ENCODE measurements at regions of chr11 and their contacts with region 1.

Region 1: GRCh38 chr11:75241036-75241905 is 697 bp downstream of the TPBGL start:
- DNase-seq: peak; percentile 86 to 87
- ATAC-seq: peak; percentile 79 to 90
- H3K4me3 ChIP-seq: peak overlapping the region; percentile 54
- H3K27ac ChIP-seq: peak overlapping the region; percentile 68 to 81; a peak in 5 of 6 replicates
- H3K4me1 ChIP-seq: peaks cover 10% of the 10 kb centered on the region; the same call in 2 of the 3 replicates
- CTCF ChIP-seq: peak; percentile 99
- EP300 ChIP-seq: no peak
- POLR2A ChIP-seq: 0 out of 2 replicates have a peak, but pooled peaks have one; percentile 36
- RAD21 ChIP-seq: peak; percentile 40 to 69; a peak in 4 of 5 replicates

Region 2: GRCh38 chr11:74819400-74819799 is 421.9 kb before region 1 on chr11:
- CTCF ChIA-PET with region 1: no interaction called
- POLR2A ChIA-PET with region 1: no interaction called
- DNase-seq: no peak
- ATAC-seq: peak; percentile 24 to 74; a peak in 3 of 6 replicates
- H3K4me3 ChIP-seq: no peak overlapping the region
- H3K27ac ChIP-seq: no peak overlapping the region
- H3K4me1 ChIP-seq: peaks cover 22% of the 10 kb centered on the region; the same call in 2 of the 3 replicates
- CTCF ChIP-seq: no peak
- EP300 ChIP-seq: no peak
- POLR2A ChIP-seq: no peak
- RAD21 ChIP-seq: no peak

Region 3: DNA sequence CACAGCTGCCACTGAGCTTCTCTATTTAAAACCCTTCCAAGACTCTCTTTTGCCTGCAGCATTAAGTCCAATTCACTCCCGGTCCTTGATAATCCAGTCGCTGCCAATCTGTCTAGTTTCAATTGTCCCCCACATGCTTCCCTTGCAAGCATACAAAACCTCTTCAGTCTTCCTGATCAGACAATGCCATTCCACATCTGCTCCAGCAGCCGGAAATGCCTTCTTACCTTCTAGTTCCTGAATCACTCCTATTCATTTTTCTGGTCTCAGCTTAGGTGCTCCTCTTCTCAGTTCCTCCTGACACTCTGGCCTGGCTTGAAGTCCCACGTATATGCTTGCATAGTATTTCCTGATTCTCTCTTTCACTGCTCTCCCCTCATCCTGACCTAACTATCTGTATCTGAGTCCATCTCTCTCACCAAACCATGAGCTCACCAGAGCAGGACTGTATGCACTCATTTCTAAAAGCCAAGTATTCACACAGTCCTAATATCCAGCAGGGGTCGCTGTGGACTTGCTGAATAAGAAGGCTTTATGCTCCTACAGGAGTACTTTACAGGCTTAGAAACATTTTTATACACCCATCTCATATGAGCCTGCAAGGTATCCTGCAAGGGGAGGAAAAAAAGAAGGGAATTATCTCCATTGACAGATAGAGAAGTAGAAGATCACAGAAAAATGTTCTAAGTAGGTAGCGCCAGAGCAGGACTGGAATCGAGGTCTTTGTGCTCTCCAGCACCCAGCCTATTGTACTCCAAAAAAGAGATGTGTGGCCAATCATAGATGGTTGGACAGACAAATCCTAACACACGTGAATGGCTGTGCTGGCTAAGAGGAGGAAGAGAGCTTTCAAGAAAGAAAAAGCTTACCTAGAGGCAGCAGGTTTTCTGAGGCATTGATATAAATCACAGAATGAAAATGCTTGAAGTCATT is 311.6 kb before region 1 on chr11:
- CTCF ChIA-PET with region 1: interaction called, 160 read pairs
- POLR2A ChIA-PET with region 1: interaction called, 3 read pairs
- DNase-seq: peak; percentile 60 to 91
- ATAC-seq: peak; percentile 97 to 99
- H3K4me3 ChIP-seq: no peak overlapping the region
- H3K27ac ChIP-seq: no peak overlapping the region
- H3K4me1 ChIP-seq: peaks cover 9% of the 10 kb centered on the region; the same call in 2 of the 3 replicates
- CTCF ChIP-seq: peak; percentile 92
- EP300 ChIP-seq: no peak
- POLR2A ChIP-seq: no peak
- RAD21 ChIP-seq: peak; percentile 81 to 90

Region 4: GRCh38 chr11:75022759-75023396 is 218.4 kb before region 1 on chr11:
- CTCF ChIA-PET with region 1: interaction called, 355 read pairs
- POLR2A ChIA-PET with region 1: no interaction called
- DNase-seq: peak; percentile 81 to 86
- ATAC-seq: peak; percentile 96 to 99
- H3K4me3 ChIP-seq: no peak overlapping the region
- H3K27ac ChIP-seq: no peak overlapping the region
- H3K4me1 ChIP-seq: no peaks in the 10 kb centered on the region
- CTCF ChIP-seq: peak; percentile 95
- EP300 ChIP-seq: no peak
- POLR2A ChIP-seq: no peak
- RAD21 ChIP-seq: peak; percentile 91 to 98

Region 5: DNA sequence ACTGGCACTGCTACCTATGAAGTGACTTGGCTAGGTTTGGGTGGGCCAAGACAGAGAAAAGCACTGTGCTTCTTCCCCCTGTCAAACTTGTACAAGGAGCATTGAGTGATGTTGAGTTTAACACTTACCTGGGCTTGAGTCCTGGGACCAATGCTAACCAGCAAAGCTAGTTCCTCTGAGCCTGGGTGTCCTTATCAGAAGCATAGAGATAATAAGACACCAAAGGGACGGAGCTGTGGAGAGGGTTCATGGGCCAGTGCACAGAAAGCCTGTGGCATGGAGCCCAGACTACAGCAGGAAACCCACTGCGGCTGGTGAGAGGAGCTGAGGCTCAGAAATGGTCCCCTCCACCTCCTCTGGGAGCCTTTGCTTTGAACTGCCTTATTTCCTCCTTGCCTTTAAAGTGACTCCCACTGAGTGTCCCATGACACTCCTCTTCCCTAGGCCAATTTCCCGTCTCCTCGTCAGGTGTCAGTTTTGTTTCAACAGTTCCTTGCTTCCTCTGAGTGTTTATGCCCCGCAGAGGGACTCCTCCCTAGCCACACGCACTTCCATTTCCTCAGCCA is 81.0 kb before region 1 on chr11:
- CTCF ChIA-PET with region 1: interaction called, 20 read pairs
- POLR2A ChIA-PET with region 1: no interaction called
- DNase-seq: no peak
- ATAC-seq: no peak
- H3K4me3 ChIP-seq: no peak overlapping the region
- H3K27ac ChIP-seq: peak overlapping the region; percentile 1 to 31; a peak in 1 of 6 replicates
- H3K4me1 ChIP-seq: peaks cover 24% of the 10 kb centered on the region
- CTCF ChIP-seq: no peak
- EP300 ChIP-seq: no peak
- POLR2A ChIP-seq: no peak
- RAD21 ChIP-seq: no peak

Region 6: DNA sequence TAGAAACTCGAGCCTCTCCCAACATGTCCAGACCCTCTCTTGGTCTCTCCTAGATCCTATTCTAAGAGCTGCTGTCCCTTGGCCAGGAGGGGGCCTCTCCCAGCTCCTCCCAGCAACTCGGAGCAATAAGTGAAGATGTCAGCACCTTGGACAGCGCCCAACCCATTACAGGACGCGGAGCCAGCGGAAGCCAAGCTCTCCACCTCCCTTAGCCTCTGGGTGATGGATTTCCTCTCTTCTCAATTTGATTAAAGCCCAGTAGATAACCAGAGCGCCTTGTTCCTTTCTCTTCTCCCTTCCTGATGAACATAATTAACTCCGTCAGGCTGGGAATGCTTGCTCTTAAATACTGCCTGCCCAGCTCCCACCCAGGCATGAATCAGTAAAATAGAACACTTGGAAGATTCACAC is 26.9 kb before region 1 on chr11:
- CTCF ChIA-PET with region 1: interaction called, 43 read pairs
- POLR2A ChIA-PET with region 1: no interaction called
- DNase-seq: peak; percentile 79 to 80
- ATAC-seq: peak; percentile 87 to 98
- H3K4me3 ChIP-seq: no peak overlapping the region
- H3K27ac ChIP-seq: no peak overlapping the region
- H3K4me1 ChIP-seq: no peaks in the 10 kb centered on the region
- CTCF ChIP-seq: peak; percentile 15; the same call in 1 of the 3 replicates
- EP300 ChIP-seq: no peak
- POLR2A ChIP-seq: no peak
- RAD21 ChIP-seq: peak in 1 of 2 experiments; percentile 21; a peak in 1 of 5 replicates

Region 7: GRCh38 chr11:75270896-75271418 is 29.7 kb after region 1 on chr11:
- CTCF ChIA-PET with region 1: interaction called, 23 read pairs
- POLR2A ChIA-PET with region 1: interaction called, 4 read pairs
- DNase-seq: peak; percentile 37 to 47
- ATAC-seq: peak; percentile 49 to 63; a peak in 3 of 6 replicates
- H3K4me3 ChIP-seq: no peak overlapping the region
- H3K27ac ChIP-seq: no peak overlapping the region
- H3K4me1 ChIP-seq: no peaks in the 10 kb centered on the region
- CTCF ChIP-seq: peak; percentile 56
- EP300 ChIP-seq: no peak
- POLR2A ChIP-seq: no peak
- RAD21 ChIP-seq: peak; percentile 53 to 56; a peak in 4 of 5 replicates